ENCODE measurements at regions of chr19 and their contacts with region 1.

Region 1: DNA sequence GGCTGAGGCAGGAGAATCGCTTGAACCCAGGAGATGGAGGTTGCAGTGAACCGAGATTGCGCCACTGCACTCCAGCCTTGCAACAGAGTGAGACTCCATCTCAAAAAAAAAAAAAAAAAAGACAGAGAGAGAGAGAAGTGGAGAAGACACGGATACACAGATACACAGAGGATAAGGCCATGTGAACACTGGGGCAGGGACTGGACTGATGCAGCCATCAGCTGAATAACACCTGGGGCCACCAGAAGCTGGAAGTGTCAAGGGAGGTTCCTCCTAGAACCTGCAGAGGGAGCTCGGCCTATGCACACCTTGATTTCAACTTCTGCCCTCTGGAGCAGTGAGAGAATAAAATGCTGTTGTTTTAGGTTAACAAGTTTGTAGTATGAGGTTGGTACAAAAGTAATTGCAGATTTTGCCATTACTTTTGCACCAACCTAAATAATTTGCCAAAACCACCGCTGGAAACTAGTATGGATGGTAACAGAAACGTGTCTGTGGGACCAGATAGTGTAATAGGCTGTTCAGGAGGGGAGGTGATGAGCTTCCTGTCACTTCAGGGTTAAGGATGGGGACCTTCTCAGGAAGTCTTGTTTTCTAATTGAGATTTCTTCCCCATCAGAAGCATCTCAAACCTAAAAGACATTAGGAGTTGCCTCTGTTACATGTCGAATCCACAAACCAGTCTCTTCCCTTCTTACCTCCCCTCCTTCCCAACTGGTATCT is 36.4 kb upstream of the IGSF23 start:
- DNase-seq: no peak
- H3K4me3 ChIP-seq: no peak overlapping the region
- H3K27ac ChIP-seq: no peak overlapping the region
- H3K4me1 ChIP-seq: no peaks in the 10 kb centered on the region
- H3K27me3 ChIP-seq: no peaks in the 10 kb centered on the region
- CTCF ChIP-seq: peak; percentile 77 to 83 (median 78)
- EP300 ChIP-seq: no peak
- POLR2A ChIP-seq: no peak
- RAD21 ChIP-seq: peak; percentile 80 to 83

Region 2: GRCh38 chr19:44539236-44539826 is 37.7 kb before region 1 on chr19:
- CTCF ChIA-PET with region 1: no interaction called
- POLR2A ChIA-PET with region 1: no interaction called
- DNase-seq: no peak
- H3K4me3 ChIP-seq: no peak overlapping the region
- H3K27ac ChIP-seq: no peak overlapping the region
- H3K4me1 ChIP-seq: no peaks in the 10 kb centered on the region; a peak in 1 of 7 replicates
- H3K27me3 ChIP-seq: no peaks in the 10 kb centered on the region
- CTCF ChIP-seq: no peak
- EP300 ChIP-seq: no peak
- POLR2A ChIP-seq: no peak
- RAD21 ChIP-seq: no peak

Region 3: GRCh38 chr19:44587963-44588770 is 11.2 kb after region 1 on chr19:
- CTCF ChIA-PET with region 1: interaction called, 37 read pairs
- POLR2A ChIA-PET with region 1: no interaction called
- DNase-seq: no peak
- H3K4me3 ChIP-seq: no peak overlapping the region
- H3K27ac ChIP-seq: no peak overlapping the region
- H3K4me1 ChIP-seq: no peaks in the 10 kb centered on the region
- H3K27me3 ChIP-seq: no peaks in the 10 kb centered on the region
- CTCF ChIP-seq: no peak
- EP300 ChIP-seq: no peak
- POLR2A ChIP-seq: no peak
- RAD21 ChIP-seq: 0 out of 4 replicates have a peak, but pooled peaks of 1 of the 2 experiments have one; percentile 7

Region 4: GRCh38 chr19:44608391-44608821 is 31.4 kb after region 1 on chr19:
- CTCF ChIA-PET with region 1: interaction called, 42 read pairs
- POLR2A ChIA-PET with region 1: no interaction called
- DNase-seq: no peak
- H3K4me3 ChIP-seq: no peak overlapping the region
- H3K27ac ChIP-seq: no peak overlapping the region
- H3K4me1 ChIP-seq: peaks cover 0 to 8% (median 4%) of the 10 kb centered on the region in 4 experiments; a peak in 5 of 7 replicates
- H3K27me3 ChIP-seq: no peaks in the 10 kb centered on the region
- CTCF ChIP-seq: no peak
- EP300 ChIP-seq: no peak
- POLR2A ChIP-seq: no peak
- RAD21 ChIP-seq: no peak

Region 5: GRCh38 chr19:44626048-44626624 is 49.1 kb after region 1 on chr19:
- CTCF ChIA-PET with region 1: interaction called, 14 read pairs
- POLR2A ChIA-PET with region 1: no interaction called
- DNase-seq: no peak
- H3K4me3 ChIP-seq: no peak overlapping the region
- H3K27ac ChIP-seq: no peak overlapping the region
- H3K4me1 ChIP-seq: no peaks in the 10 kb centered on the region
- H3K27me3 ChIP-seq: no peaks in the 10 kb centered on the region; a peak in 1 of 7 replicates
- CTCF ChIP-seq: no peak
- EP300 ChIP-seq: no peak
- POLR2A ChIP-seq: no peak
- RAD21 ChIP-seq: no peak

Region 6: GRCh38 chr19:44635581-44636438 is 58.8 kb after region 1 on chr19:
- CTCF ChIA-PET with region 1: interaction called, 12 read pairs
- POLR2A ChIA-PET with region 1: no interaction called
- DNase-seq: no peak
- H3K4me3 ChIP-seq: no peak overlapping the region
- H3K27ac ChIP-seq: no peak overlapping the region
- H3K4me1 ChIP-seq: peaks cover 0 to 2% (median 0%) of the 10 kb centered on the region in 4 experiments; a peak in 1 of 7 replicates
- H3K27me3 ChIP-seq: no peaks in the 10 kb centered on the region
- CTCF ChIP-seq: no peak
- EP300 ChIP-seq: no peak
- POLR2A ChIP-seq: no peak
- RAD21 ChIP-seq: no peak

Region 7: GRCh38 chr19:44643605-44644401 is 66.8 kb after region 1 on chr19 and contains the start of gene PVR:
- CTCF ChIA-PET with region 1: interaction called, 25 read pairs
- POLR2A ChIA-PET with region 1: interaction called, 3 read pairs
- DNase-seq: peak; percentile 29 to 77
- H3K4me3 ChIP-seq: peak within 1 kb of the TSS; percentile 54 to 99 (median 74)
- H3K27ac ChIP-seq: no peak within 1 kb of the TSS; the same call in 1 of the 2 replicates
- H3K4me1 ChIP-seq: peaks cover 0 to 2% (median under 1%) of the 10 kb centered on the region in 4 experiments; a peak in 2 of 7 replicates
- H3K27me3 ChIP-seq: peaks cover 0 to 8% (median 6%) of the 10 kb centered on the region in 4 experiments; a peak in 6 of 7 replicates
- CTCF ChIP-seq: no peak
- EP300 ChIP-seq: no peak
- POLR2A ChIP-seq: peak in 1 of 2 experiments; percentile 20; a peak in 1 of 3 replicates
- RAD21 ChIP-seq: no peak
- total RNA-seq, gene PVR: 13.3 and 14.1 TPM in 2 replicates

Region 8: GRCh38 chr19:44662691-44663385 is 85.8 kb after region 1 on chr19:
- CTCF ChIA-PET with region 1: interaction called, 126 read pairs
- POLR2A ChIA-PET with region 1: interaction called, 4 read pairs
- DNase-seq: no peak
- H3K4me3 ChIP-seq: no peak overlapping the region
- H3K27ac ChIP-seq: no peak overlapping the region
- H3K4me1 ChIP-seq: no peaks in the 10 kb centered on the region; a peak in 2 of 7 replicates
- H3K27me3 ChIP-seq: no peaks in the 10 kb centered on the region
- CTCF ChIP-seq: no peak
- EP300 ChIP-seq: no peak
- POLR2A ChIP-seq: no peak
- RAD21 ChIP-seq: no peak

Measured in H1 (cell line).